Endothelial cell of umbilical vein (primary cell): ENCODE measurements at regions of chr7 and their contacts with region 1.

Region 1: DNA sequence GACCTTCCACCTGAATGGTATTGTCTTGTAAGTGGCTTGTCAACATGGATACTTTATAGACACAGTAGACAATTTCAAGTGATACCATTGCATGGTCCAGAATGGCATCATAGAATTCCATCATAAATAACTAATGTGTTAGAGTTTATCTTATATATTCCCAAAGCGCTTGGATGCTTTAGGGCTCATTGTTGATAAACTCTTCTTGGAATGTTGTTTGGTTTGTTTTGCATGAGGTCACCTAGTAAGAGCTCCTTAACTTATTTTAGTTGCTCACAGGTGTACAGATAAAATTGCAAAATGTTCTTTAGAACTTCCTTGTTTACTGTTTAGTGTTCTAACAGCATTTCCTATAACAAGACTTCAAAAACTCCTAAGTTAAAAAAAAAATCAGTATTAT is 36.8 kb downstream of the SRI start:
- DNase-seq: no peak
- H3K4me3 ChIP-seq: no peak overlapping the region
- H3K27ac ChIP-seq: no peak overlapping the region
- H3K4me1 ChIP-seq: no peaks in the 10 kb centered on the region
- H3K27me3 ChIP-seq: no peaks in the 10 kb centered on the region
- CTCF ChIP-seq: no peak
- POLR2A ChIP-seq: no peak

Region 2: DNA sequence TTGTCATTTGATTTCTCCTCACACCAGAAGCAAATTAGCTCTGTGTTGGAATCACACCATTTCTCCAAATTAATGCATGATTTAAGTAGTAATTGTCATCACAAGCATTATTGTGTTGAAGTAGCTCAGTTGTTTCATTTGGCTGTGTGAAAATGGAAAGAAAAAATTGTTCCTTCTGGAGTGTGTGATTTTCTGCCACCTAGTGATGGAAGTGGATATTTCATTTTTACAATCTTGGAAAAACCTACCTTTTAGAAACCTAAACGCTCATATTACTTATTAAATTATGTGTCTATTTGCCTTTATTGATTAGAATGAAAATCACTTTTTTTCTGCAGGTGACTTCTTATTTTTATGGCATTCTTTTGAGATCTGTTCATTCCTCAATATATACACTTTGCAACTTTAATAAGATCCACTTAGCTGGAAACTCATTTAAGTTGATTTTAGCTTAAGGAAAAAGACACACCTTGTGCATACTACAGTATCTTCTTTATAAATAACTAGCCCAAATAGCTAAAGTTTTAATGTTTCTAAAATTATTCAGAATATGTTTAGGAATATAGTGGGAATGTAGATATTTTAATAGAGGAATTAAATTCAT is 13.2 kb before region 1 on chr7:
- CTCF ChIA-PET with region 1: interaction called, 13 read pairs
- POLR2A ChIA-PET with region 1: no interaction called
- dilution Hi-C with region 1: no loop called
- intact Hi-C with region 1: no loop called
- DNase-seq: peak; percentile 40
- H3K4me3 ChIP-seq: no peak overlapping the region
- H3K27ac ChIP-seq: no peak overlapping the region
- H3K4me1 ChIP-seq: no peaks in the 10 kb centered on the region
- H3K27me3 ChIP-seq: no peaks in the 10 kb centered on the region
- CTCF ChIP-seq: peak; percentile 17 to 33
- POLR2A ChIP-seq: no peak